Left colon (tissue), 2 donors: ENCODE measurements at regions of chr9 and their contacts with region 1.

Region 1: DNA sequence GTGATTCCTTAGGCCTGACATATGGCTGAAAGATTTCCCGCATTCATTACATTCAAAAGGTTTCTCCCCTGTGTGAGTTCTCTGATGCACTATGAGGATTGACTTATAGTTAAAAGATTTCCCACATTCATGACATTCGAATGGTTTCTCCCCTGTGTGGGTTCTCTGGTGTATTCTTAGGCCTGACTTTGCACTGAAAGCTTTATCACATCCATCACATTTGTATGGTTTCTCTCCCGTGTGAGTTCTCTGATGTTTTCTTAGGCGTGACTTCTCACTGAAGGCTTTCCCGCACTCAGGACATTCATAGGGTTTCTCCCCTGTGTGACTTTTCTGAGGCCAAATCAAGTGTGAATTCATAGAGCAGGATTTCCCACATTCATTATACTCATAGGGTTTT is 35.8 kb downstream of the ZNF782 start:
- DNase-seq: no peak
- ATAC-seq: no peak

Region 2: GRCh38 chr9:96751815-96752214 is 66.7 kb before region 1 on chr9:
- intact Hi-C with region 1: loop called in 1 of 2 experiments (anchors 10 kb)
- DNase-seq: no peak
- ATAC-seq: no peak

Region 3: GRCh38 chr9:97271292-97271691 is 452.8 kb after region 1 on chr9:
- intact Hi-C with region 1: no loop called
- DNase-seq: no peak
- ATAC-seq: no peak